ENCODE measurements at regions of chr10 and their contacts with region 1.

Region 1: GRCh38 chr10:78004215-78005026 is 24.9 kb downstream of the POLR3A start:
- DNase-seq: no peak
- H3K4me3 ChIP-seq: no peak overlapping the region
- H3K27ac ChIP-seq: no peak overlapping the region
- H3K4me1 ChIP-seq: peaks cover 0 to 2% (median 2%) of the 10 kb centered on the region in 3 donors
- H3K27me3 ChIP-seq: no peaks in the 10 kb centered on the region
- CTCF ChIP-seq: no peak

Region 2: GRCh38 chr10:77857254-77857653 is 147.2 kb before region 1 on chr10:
- intact Hi-C with region 1: loop called (anchors 10 kb)
- DNase-seq: no peak
- H3K4me3 ChIP-seq: no peak overlapping the region
- H3K27ac ChIP-seq: peak overlapping the region in 1 of 2 donors; percentile 20
- H3K4me1 ChIP-seq: peaks cover 0 to 4% (median 3%) of the 10 kb centered on the region in 3 donors
- H3K27me3 ChIP-seq: no peaks in the 10 kb centered on the region
- CTCF ChIP-seq: no peak

Measured in kidney (tissue), 22 donors.